ENCODE measurements at regions of chr12 and their contacts with region 1.

Region 1: DNA sequence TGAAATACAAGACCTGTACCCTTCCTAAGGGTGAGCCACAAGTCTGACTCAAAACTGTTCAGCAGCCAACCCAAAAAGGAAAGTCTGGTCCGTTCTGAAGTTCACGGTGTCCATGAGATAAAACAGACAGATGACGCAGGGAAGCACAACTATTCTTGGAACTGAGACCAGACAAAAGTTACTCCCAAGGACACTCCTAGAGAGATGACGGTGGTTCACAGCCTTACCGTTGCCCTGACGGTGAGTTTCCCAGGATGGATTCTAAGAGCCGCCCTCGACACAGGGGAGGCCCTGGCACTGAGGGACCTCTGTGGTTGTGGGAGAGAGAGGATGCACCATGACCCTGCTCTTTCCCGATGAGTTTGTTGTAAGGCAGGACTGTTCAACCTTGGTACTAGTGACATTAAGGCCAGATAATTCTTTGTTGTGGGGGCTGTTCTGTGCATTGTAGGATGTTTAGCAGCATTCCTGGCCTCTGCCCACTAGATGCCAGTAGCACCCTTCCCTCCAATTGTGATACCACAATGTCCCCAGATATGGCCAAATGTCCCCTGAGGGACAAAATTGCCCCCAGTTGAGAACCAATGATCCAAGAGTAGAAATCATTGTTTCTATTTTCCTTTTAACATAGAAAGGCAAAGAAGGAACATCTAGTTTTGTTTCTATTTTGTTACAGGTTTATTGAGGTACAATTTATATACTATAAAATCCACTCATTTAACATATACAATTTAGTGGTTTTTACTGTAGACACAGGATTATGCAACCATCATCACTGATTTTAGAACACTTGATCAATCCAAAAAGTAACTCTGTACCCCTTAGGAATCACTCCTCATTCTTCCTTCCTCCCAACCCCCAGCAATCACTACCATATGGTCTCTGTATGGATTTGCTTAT is 23.0 kb downstream of the OR10P1 start:
- DNase-seq: peak in 1 of 2 donors; percentile 66
- ATAC-seq: peak; percentile 74 to 94 (median 90)
- H3K4me3 ChIP-seq: peak overlapping the region in 4 of 10 donors; percentile 4 to 24 (median 14)
- H3K27ac ChIP-seq: peak overlapping the region; percentile 68 to 96 (median 87)
- H3K4me1 ChIP-seq: peaks cover 0 to 30% (median 18%) of the 10 kb centered on the region in 9 donors
- H3K27me3 ChIP-seq: no peaks in the 10 kb centered on the region
- CTCF ChIP-seq: peak in 8 of 9 donors; percentile 13 to 63 (median 51)

Region 2: GRCh38 chr12:55194382-55194781 is 465.4 kb before region 1 on chr12:
- intact Hi-C with region 1: loop called in 1 of 10 experiments (anchors 5 kb)
- DNase-seq: no peak
- ATAC-seq: no peak
- H3K4me3 ChIP-seq: no peak overlapping the region
- H3K27ac ChIP-seq: no peak overlapping the region
- H3K4me1 ChIP-seq: no peaks in the 10 kb centered on the region
- H3K27me3 ChIP-seq: peaks cover 0 to 20% (median 0%) of the 10 kb centered on the region in 7 donors
- CTCF ChIP-seq: no peak

Region 3: DNA sequence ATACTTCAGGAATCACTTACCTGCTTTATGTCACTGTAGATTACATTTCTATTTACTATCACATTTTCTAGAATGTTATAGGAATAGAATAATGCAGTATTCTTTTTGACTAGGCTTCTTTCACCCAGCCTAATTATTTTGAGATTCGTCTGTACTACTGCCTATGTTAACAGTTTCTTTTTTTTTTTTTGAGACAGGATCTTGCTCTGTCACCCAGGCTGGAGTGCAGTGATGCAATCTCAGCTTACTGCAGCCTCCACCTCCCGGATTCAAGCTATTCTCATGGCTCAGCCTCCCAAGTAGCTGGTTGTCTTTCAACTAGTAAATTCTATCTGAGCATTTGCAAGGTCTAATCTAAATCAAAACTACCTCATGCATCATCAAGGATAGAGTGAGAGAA is 369.7 kb before region 1 on chr12:
- intact Hi-C with region 1: no loop called
- DNase-seq: no peak
- ATAC-seq: no peak
- H3K4me3 ChIP-seq: no peak overlapping the region
- H3K27ac ChIP-seq: no peak overlapping the region
- H3K4me1 ChIP-seq: no peaks in the 10 kb centered on the region
- H3K27me3 ChIP-seq: no peaks in the 10 kb centered on the region
- CTCF ChIP-seq: no peak

Region 4: DNA sequence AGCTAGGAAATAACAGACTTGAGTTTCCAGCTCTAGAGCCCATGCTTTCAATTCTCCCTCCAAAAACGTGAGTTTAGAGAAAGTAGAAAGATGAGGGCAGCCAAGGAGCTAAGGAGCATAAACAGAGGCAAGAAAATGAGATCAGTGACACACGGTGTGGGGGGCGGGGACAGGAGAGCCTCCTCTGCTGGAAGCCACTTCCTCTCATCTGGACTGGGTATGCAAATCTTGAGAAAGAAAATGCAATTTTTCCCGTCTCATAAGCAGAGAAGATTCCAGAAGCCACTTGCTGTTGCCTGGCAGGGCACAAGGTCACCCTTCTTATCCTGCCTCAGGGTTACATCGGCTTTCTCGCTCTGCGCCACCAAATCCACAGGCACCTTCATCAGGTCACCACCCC is 17.1 kb before region 1 on chr12:
- intact Hi-C with region 1: loop called in 1 of 10 experiments (anchors 1 kb)
- DNase-seq: no peak
- ATAC-seq: no peak
- H3K4me3 ChIP-seq: no peak overlapping the region
- H3K27ac ChIP-seq: peak overlapping the region in 2 of 10 donors; percentile 36 to 84
- H3K4me1 ChIP-seq: peaks cover 0 to 60% (median 8%) of the 10 kb centered on the region in 9 donors
- H3K27me3 ChIP-seq: peaks cover 0 to 3% (median 0%) of the 10 kb centered on the region in 7 donors
- CTCF ChIP-seq: no peak

Region 5: GRCh38 chr12:55728939-55729823 is 69.4 kb after region 1 on chr12 and contains the start of gene CD63:
- intact Hi-C with region 1: loop called in 3 of 10 experiments (anchors 5 kb)
- DNase-seq: peak; percentile 91 to 94
- ATAC-seq: peak; percentile 86 to 93 (median 90)
- H3K4me3 ChIP-seq: peak within 1 kb of the TSS; percentile 66 to 98 (median 87)
- H3K27ac ChIP-seq: peak within 1 kb of the TSS; percentile 96 to 100 (median 99)
- H3K4me1 ChIP-seq: peaks cover 14 to 60% (median 51%) of the 10 kb centered on the region in 9 donors
- H3K27me3 ChIP-seq: no peaks in the 10 kb centered on the region
- CTCF ChIP-seq: no peak
- total RNA-seq, gene CD63: 565 to 1,547 (median 768) TPM

Region 6: DNA sequence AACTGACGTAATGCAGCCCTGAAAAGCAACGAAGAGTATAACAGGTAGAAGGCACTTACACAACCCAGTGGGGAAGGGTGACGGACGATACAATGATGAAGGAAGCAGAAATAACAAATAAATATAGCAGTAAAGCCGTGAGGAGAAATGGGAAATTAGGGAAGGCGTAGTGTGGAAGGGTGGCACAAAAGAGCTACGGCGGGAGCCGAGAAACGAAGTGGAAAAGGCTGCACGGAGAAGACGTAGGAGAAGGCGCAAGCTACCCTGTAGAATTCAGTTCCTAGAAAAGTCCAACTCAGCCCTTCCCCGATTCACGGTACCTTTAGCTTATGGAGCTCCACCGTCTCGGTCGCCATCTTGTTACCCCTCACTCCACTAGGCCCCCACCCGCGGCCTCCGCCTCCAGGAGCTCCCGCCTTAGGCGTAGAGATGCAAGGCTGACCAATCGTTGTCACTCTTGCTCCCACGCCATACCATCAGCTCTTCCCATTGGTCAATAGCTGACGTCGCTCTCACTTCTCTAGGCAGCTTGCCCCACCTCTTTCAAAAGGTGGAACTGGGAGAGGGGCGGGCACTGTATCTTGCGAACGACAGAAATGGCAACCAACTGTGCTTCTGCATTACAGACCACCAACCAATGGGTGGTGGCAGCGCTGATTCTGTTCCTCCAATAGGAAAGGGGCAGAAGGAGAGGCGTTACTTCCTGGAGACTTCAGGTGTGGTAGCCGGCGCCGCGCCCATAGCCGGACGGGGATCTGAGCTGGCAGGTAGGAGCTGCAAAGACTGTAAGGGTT is 157.8 kb after region 1 on chr12 and contains the starts of genes ORMDL2 and SARNP:
- intact Hi-C with region 1: loop called in 1 of 10 experiments (anchors 10 kb)
- DNase-seq: peak; percentile 92 to 99
- ATAC-seq: peak; percentile 98 to 99 (median 99)
- H3K4me3 ChIP-seq: peak within 1 kb of the TSS; percentile 57 to 89 (median 76)
- H3K27ac ChIP-seq: peak within 1 kb of the TSS; percentile 45 to 96 (median 84)
- H3K4me1 ChIP-seq: peaks cover 4 to 54% (median 37%) of the 10 kb centered on the region in 9 donors
- H3K27me3 ChIP-seq: no peaks in the 10 kb centered on the region
- CTCF ChIP-seq: no peak
- total RNA-seq, gene ORMDL2: 10.3 to 36.9 (median 17.4) TPM
- total RNA-seq, gene SARNP: 47.5 to 58.0 (median 53.2) TPM

Measured in heart right ventricle (tissue), 16 donors.